GM12878 (cell line): ENCODE measurements at regions of chr1 and their contacts with region 1.

Region 1: GRCh38 chr1:65812065-65812464 is 19.4 kb downstream of the PDE4B start:
- DNase-seq: peak; percentile 96
- ATAC-seq: peak; percentile 100
- H3K4me3 ChIP-seq: no peak overlapping the region
- H3K27ac ChIP-seq: no peak overlapping the region; the same call in 1 of the 2 replicates
- H3K4me1 ChIP-seq: peaks cover 8% of the 10 kb centered on the region
- H3K27me3 ChIP-seq: no peaks in the 10 kb centered on the region
- CTCF ChIP-seq: no peak
- EP300 ChIP-seq: peak in 1 of 2 experiments; percentile 26; a peak in 1 of 4 replicates
- POLR2A ChIP-seq: no peak
- RAD21 ChIP-seq: peak; percentile 11; the same call in 1 of the 2 replicates

Region 2: GRCh38 chr1:65419681-65420589 is 392.1 kb before region 1 on chr1:
- CTCF ChIA-PET with region 1: no interaction called
- POLR2A ChIA-PET with region 1: no interaction called
- RAD21 ChIA-PET with region 1: no interaction called
- SMC1A ChIA-PET with region 1: no interaction called
- in situ Hi-C with region 1: no loop called
- intact Hi-C with region 1: loop called (anchors 1 kb)
- DNase-seq: peak; percentile 87
- ATAC-seq: peak; percentile 95
- H3K4me3 ChIP-seq: peak overlapping the region; percentile 96
- H3K27ac ChIP-seq: peak overlapping the region; percentile 84
- H3K4me1 ChIP-seq: peaks cover 6% of the 10 kb centered on the region
- H3K27me3 ChIP-seq: no peaks in the 10 kb centered on the region
- CTCF ChIP-seq: no peak
- EP300 ChIP-seq: no peak; a peak in 1 of 4 replicates
- POLR2A ChIP-seq: peak; percentile 71
- RAD21 ChIP-seq: no peak

Region 3: GRCh38 chr1:65773391-65773790 is 38.7 kb before region 1 on chr1:
- CTCF ChIA-PET with region 1: interaction called, 5 read pairs
- POLR2A ChIA-PET with region 1: interaction called, 13 read pairs
- RAD21 ChIA-PET with region 1: no interaction called
- SMC1A ChIA-PET with region 1: no interaction called
- in situ Hi-C with region 1: no loop called
- intact Hi-C with region 1: no loop called
- DNase-seq: no peak
- ATAC-seq: no peak
- H3K4me3 ChIP-seq: no peak overlapping the region
- H3K27ac ChIP-seq: no peak overlapping the region
- H3K4me1 ChIP-seq: no peaks in the 10 kb centered on the region
- H3K27me3 ChIP-seq: no peaks in the 10 kb centered on the region
- CTCF ChIP-seq: no peak
- EP300 ChIP-seq: no peak
- POLR2A ChIP-seq: no peak
- RAD21 ChIP-seq: no peak